ENCODE measurements at regions of chr2 and their contacts with region 1.

Region 1: GRCh38 chr2:535222-535621 is 142.0 kb downstream of the TMEM18 start:
- DNase-seq: no peak
- ATAC-seq: no peak
- H3K4me3 ChIP-seq: no peak overlapping the region
- H3K4me3 Mint-ChIP-seq: no peak overlapping the region
- H3K27ac ChIP-seq: no peak overlapping the region
- H3K27ac Mint-ChIP-seq: no peak overlapping the region
- H3K4me1 ChIP-seq: no peaks in the 10 kb centered on the region
- H3K4me1 Mint-ChIP-seq: no peaks in the 10 kb centered on the region
- H3K27me3 ChIP-seq: peaks cover 4% of the 10 kb centered on the region
- H3K27me3 Mint-ChIP-seq: peaks cover 32 to 59% of the 10 kb centered on the region in 2 donors
- CTCF ChIP-seq: no peak

Region 2: DNA sequence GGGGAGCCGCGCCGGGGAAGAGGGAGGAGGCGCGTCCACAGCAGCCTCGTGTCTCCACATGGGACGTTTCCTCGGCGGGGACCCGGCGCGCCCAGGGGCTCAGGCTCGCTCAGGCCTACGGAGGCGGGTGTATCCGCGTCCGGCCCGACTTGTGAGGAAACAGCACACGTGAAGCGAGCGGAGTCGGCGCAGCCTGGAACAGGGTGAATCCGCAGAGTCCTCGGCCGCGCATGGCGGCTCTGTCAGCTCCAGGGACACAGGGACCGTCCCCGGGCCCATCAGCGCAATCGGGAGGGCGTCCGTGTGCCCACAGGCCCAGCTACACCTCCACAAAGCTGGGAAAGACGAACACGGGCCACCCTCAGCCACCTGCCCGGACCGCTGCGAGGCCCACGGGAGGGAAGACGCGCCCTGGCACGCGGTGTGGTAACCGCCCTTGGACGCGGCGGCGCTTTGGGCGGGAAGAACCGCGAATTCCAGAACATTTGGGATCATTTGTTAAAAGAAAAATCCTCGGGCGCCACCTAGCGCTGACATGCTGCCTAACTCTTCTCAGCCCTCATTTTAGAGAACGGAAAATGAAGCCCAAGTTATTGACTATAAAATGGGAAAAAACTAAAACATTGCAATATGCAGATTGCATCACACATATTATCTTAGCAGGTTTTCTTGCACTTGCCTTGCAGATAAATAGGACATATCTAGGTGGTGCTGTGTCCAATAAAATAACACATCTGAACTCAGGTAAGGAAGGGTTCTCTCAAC is 101.6 kb after region 1 on chr2:
- intact Hi-C with region 1: loop called (anchors 10 kb)
- DNase-seq: peak; percentile 53 to 73
- ATAC-seq: peak; percentile 51 to 85 (median 78)
- H3K4me3 ChIP-seq: peak overlapping the region; percentile 49
- H3K4me3 Mint-ChIP-seq: peak overlapping the region; percentile 85
- H3K27ac ChIP-seq: no peak overlapping the region
- H3K27ac Mint-ChIP-seq: peak overlapping the region in 1 of 2 donors; percentile 87
- H3K4me1 ChIP-seq: peaks cover 8% of the 10 kb centered on the region
- H3K4me1 Mint-ChIP-seq: peaks cover 0 to 7% of the 10 kb centered on the region in 2 donors
- H3K27me3 ChIP-seq: no peaks in the 10 kb centered on the region
- H3K27me3 Mint-ChIP-seq: peaks cover 0 to under 1% of the 10 kb centered on the region in 2 donors
- CTCF ChIP-seq: peak; percentile 99

Region 3: DNA sequence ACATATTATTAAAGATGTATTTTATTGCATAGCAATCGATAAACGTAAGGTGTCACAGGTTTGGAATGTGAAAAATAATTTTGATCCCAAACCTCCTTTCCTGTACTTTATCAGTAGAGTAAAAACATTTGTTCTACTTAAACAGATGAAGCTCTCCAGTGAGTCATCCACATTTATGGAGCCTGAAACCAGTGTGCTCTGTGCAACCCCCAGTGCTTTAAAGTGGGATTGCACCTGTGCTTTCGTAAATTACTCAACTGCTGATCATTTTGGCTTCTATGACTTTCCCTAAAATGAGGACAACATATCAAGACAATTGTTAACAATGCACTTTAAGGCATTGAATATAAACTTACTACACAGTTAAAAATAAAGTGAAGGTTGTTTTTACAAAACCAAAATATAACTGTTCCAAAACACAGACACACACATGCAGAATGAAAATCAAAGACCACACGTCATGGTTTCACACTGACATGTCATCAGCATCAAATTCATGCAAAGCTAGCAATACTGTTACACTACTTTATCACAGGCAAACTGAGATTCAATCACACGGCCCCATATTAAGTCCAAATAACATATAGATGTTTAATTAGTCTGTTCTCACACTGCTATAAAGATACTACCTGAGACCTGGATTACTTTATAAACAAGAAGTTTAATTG is 132.2 kb after region 1 on chr2:
- intact Hi-C with region 1: loop called (anchors 10 kb)
- DNase-seq: peak in 1 of 2 donors; percentile 43
- ATAC-seq: peak; percentile 52 to 81 (median 62)
- H3K4me3 ChIP-seq: no peak overlapping the region
- H3K4me3 Mint-ChIP-seq: no peak overlapping the region
- H3K27ac ChIP-seq: no peak overlapping the region
- H3K27ac Mint-ChIP-seq: no peak overlapping the region
- H3K4me1 ChIP-seq: peaks cover 24% of the 10 kb centered on the region
- H3K4me1 Mint-ChIP-seq: peaks cover 36% of the 10 kb centered on the region in 2 donors
- H3K27me3 ChIP-seq: no peaks in the 10 kb centered on the region
- H3K27me3 Mint-ChIP-seq: no peaks in the 10 kb centered on the region
- CTCF ChIP-seq: peak; percentile 41

Region 4: GRCh38 chr2:1915196-1915595 is 1380.0 kb after region 1 on chr2:
- intact Hi-C with region 1: no loop called
- DNase-seq: no peak
- ATAC-seq: no peak
- H3K4me3 ChIP-seq: no peak overlapping the region
- H3K4me3 Mint-ChIP-seq: no peak overlapping the region
- H3K27ac ChIP-seq: no peak overlapping the region
- H3K27ac Mint-ChIP-seq: no peak overlapping the region
- H3K4me1 ChIP-seq: no peaks in the 10 kb centered on the region
- H3K4me1 Mint-ChIP-seq: peaks cover 0 to 8% of the 10 kb centered on the region in 2 donors
- H3K27me3 ChIP-seq: no peaks in the 10 kb centered on the region
- H3K27me3 Mint-ChIP-seq: peaks cover 4 to 19% of the 10 kb centered on the region in 2 donors
- CTCF ChIP-seq: no peak